Breast epithelium (tissue), 4 donors: ENCODE measurements at regions of chr10 and their contacts with region 1.

Region 1: DNA sequence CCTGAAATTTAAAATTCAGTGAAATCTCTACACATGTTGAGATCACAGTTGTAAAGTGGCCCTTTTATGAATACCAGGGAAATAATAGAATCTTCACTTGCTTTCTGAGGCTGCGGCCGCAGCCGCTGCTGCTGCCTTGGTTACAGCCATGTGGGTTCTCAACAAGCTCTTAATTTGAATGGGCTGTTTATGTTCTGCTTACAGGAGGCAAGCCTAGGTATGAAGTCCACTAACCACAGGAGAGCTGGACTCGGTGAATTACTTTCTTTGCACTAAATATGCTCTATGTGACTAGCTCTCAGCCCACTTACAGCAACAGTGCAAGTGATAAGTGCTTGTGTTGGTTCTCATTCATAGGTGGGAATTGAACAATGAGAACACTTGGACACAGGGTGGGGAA is 410.8 kb downstream of the SFMBT2 start:
- DNase-seq: no peak
- H3K4me3 ChIP-seq: no peak overlapping the region
- H3K27ac ChIP-seq: no peak overlapping the region
- H3K4me1 ChIP-seq: no peaks in the 10 kb centered on the region
- H3K27me3 ChIP-seq: no peaks in the 10 kb centered on the region
- CTCF ChIP-seq: no peak
- POLR2A ChIP-seq: no peak

Region 2: DNA sequence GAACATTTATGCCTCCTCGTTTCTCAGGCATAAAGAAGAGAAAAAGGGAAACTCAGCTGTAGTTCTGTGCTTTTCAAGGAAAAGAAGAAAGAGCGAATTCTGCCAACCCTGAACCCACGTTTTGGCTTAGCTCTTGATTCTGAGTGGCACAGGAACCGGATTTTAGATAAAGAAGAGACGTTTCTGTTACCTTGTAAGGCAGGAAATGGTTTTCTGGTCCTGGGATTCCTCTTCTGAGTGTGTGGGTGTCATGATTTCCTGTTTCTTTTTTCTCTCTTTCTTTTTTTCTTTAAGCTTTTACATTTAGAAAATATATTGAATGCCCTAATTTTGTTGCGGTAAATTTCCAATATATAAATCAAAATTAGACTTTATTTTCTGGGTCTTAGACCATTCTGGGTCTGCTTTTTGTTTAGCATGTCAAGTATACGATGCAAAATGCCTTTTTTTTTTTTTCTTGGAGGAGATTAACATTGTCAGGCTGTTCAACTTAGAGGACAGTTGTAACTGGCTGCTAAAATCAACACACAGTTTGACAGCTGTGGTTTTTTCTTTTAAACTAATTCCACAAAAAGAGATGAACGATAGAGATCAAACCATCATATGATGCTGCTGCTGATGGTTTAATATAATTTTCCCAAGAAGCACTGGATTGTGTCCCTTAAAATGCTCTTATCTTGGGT is 1245.2 kb after region 1 on chr10:
- intact Hi-C with region 1: loop called (anchors 10 kb)
- DNase-seq: no peak
- H3K4me3 ChIP-seq: no peak overlapping the region
- H3K27ac ChIP-seq: peak overlapping the region in 1 of 2 donors; percentile 47
- H3K4me1 ChIP-seq: no peaks in the 10 kb centered on the region
- H3K27me3 ChIP-seq: no peaks in the 10 kb centered on the region
- CTCF ChIP-seq: no peak
- POLR2A ChIP-seq: no peak